Heart right ventricle (tissue), 16 donors: ENCODE measurements at regions of chr9 and their contacts with region 1.

Region 1: GRCh38 chr9:71072587-71072986 is 48.8 kb downstream of the TRPM3 start:
- DNase-seq: no peak
- ATAC-seq: no peak
- H3K4me3 ChIP-seq: no peak overlapping the region
- H3K27ac ChIP-seq: no peak overlapping the region
- H3K4me1 ChIP-seq: no peaks in the 10 kb centered on the region
- H3K27me3 ChIP-seq: no peaks in the 10 kb centered on the region
- CTCF ChIP-seq: no peak

Region 2: GRCh38 chr9:71121275-71122021 is 48.9 kb after region 1 on chr9 and contains the start of gene TRPM3:
- intact Hi-C with region 1: loop called in 1 of 10 experiments (anchors 10 kb)
- DNase-seq: no peak
- ATAC-seq: no peak
- H3K4me3 ChIP-seq: peak within 1 kb of the TSS in 1 of 10 donors; percentile 14
- H3K27ac ChIP-seq: no peak within 1 kb of the TSS
- H3K4me1 ChIP-seq: peaks cover 0 to 8% (median 0%) of the 10 kb centered on the region in 9 donors
- H3K27me3 ChIP-seq: peaks cover 0 to 60% (median 34%) of the 10 kb centered on the region in 7 donors
- CTCF ChIP-seq: no peak
- total RNA-seq, gene TRPM3: 0.05 to 1.3 (median 0.36) TPM in 9 of 10 donors, not detected in the other

Region 3: GRCh38 chr9:71847892-71848291 is 775.3 kb after region 1 on chr9:
- intact Hi-C with region 1: loop called in 1 of 10 experiments (anchors 10 kb)
- DNase-seq: no peak
- ATAC-seq: no peak
- H3K4me3 ChIP-seq: no peak overlapping the region
- H3K27ac ChIP-seq: no peak overlapping the region
- H3K4me1 ChIP-seq: no peaks in the 10 kb centered on the region
- H3K27me3 ChIP-seq: no peaks in the 10 kb centered on the region
- CTCF ChIP-seq: no peak